ENCODE measurements at regions of chr7 and their contacts with region 1.

Region 1: DNA sequence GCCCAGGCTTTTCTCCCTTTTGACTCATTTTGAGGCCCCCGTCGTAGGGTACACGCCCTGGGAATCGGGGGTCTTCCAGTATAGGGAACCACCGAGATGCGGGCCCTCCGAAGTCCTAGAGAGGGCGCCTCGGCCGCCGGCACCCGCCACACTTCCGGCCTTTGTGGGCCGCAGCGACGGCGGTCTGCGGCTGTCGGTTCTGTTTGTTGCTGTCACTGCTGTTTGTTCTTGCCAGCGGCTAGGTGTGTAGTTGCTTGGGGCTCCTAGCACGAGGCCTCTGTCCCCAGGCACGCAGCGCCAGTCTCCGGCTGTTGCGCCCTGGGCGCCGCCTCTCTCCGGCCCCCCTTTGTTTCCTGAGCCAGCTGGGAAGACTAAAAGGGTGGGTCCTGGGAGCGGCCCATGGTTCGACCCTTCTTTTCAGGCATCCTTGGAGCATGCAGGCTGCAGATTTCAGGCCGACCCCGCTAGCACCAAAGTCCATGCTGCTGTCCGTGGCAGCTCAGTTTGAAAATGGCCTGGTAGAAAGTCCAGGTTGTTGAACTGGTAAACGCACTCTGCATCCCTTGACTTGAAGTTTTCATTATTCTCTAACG is 17.8 kb upstream of the ZKSCAN1 start:
- DNase-seq: no peak
- ATAC-seq: peak; percentile 46
- H3K4me3 ChIP-seq: peak overlapping the region; percentile 39; the same call in 1 of the 2 replicates
- H3K27ac ChIP-seq: no peak overlapping the region
- H3K4me1 ChIP-seq: peaks cover 1% of the 10 kb centered on the region; the same call in 1 of the 2 replicates
- H3K27me3 ChIP-seq: peaks cover 5% of the 10 kb centered on the region
- CTCF ChIP-seq: no peak
- POLR2A ChIP-seq: no peak
- RAD21 ChIP-seq: no peak

Region 2: DNA sequence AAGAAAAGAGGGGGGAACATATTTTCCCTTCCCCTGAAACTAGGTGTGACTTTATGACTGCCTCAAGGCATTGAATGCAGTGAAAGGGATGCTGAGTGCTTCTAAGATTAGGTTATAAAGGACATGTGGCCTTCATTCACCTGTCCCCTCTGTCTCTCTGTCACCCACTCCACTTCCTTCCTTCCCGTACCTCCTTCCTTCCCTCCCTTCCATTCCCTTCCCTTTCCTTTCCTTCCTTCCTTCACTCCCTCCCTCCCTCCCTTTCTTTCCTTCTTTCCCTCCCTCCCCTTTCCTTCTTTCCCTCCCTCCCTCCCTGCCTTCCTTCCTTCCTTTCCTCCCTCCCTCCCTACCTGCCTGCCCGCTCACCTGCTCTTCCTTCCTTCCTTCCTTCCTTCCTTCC is 13.3 kb after region 1 on chr7:
- CTCF ChIA-PET with region 1: no interaction called
- POLR2A ChIA-PET with region 1: no interaction called
- dilution Hi-C with region 1: no loop called
- in situ Hi-C with region 1: no loop called
- intact Hi-C with region 1: no loop called
- DNase-seq: no peak
- ATAC-seq: no peak
- H3K4me3 ChIP-seq: no peak overlapping the region
- H3K27ac ChIP-seq: no peak overlapping the region
- H3K4me1 ChIP-seq: no peaks in the 10 kb centered on the region
- H3K27me3 ChIP-seq: peaks cover 12% of the 10 kb centered on the region
- CTCF ChIP-seq: no peak
- POLR2A ChIP-seq: no peak
- RAD21 ChIP-seq: no peak

Region 3: DNA sequence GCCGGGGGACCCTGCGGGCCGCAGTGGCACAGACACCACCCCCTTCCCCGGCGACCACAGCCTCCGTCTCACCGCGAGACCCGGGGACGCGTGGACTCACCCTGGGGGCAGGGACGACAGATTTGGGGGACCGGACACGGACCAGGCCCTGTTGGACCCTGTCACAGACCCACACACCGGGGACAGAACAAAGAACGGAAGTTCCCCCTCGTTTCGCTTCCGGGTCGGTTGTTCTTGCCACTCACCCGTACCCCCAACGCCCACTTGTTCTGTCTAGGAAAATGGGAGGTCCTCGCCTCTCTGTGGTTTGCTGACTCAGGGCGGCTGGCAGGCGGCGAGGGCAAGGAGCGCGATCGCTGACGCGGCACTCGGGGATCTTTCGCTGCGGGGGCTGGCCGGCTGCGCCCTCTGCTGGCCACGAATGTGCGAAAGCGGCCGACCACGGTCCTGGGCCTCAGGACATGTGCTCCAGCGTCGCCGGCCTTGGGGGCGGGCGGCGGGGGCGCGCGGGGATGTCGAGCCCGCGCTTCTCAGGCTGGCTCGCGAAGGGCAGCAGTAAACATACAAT is 84.0 kb after region 1 on chr7 and contains the start of gene ZNF3:
- CTCF ChIA-PET with region 1: no interaction called
- POLR2A ChIA-PET with region 1: no interaction called
- dilution Hi-C with region 1: no loop called
- in situ Hi-C with region 1: no loop called
- intact Hi-C with region 1: loop called (anchors 1 kb)
- DNase-seq: peak; percentile 99
- ATAC-seq: peak; percentile 90
- H3K4me3 ChIP-seq: peak within 1 kb of the TSS; percentile 73
- H3K27ac ChIP-seq: peak within 1 kb of the TSS; percentile 87
- H3K4me1 ChIP-seq: peaks cover 9% of the 10 kb centered on the region
- H3K27me3 ChIP-seq: no peaks in the 10 kb centered on the region
- CTCF ChIP-seq: peak; percentile 95
- POLR2A ChIP-seq: peak; percentile 90
- RAD21 ChIP-seq: peak; percentile 73
- total RNA-seq, gene ZNF3: 30.8 and 33.1 TPM in 2 replicates

Region 4: DNA sequence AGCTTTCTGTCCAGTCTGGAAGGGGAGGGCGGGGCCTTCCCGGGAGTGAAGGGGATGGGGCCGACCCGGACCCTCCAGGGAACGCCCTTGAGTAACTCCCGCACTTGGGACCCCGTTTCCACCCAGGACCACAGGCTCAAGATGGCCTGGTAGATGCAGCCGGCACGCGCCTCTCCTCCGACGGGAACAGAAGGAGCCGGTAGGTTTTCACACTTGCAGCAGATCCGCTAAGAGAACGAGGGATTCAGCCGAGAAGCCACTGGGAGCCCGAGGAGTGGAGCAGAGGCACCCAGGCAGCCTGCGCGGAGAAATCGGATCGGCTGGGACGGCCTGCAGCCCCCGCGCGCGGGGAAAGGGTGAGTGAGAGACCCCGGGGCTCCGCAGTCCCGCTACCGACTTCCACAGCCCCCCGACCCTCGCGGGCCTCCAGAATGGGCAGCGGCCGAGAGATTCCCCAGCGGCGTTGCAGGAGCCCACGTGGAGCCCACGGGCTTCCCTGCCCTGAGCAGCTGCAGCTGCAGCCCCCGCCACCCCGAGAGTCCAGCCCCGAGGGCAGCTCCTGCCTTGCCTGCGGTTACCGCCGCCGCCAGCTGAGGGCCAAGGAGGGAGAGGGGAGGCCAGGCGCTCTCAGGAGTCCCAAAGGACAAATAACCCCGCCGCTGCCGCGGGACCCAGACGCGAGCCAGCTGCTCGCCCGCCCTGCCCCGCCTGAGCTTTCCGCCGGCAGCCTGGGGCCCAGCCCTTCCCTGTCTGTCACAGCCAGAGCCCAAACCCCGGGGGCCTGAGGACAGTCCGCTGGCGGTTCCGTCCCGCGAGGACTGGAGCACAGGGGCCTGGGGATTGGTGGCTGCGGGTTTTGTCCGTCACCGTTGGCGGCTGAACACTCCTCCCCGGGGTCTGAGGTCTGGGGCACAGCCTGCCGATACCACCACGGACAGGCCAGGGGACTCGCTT is 1302.1 kb after region 1 on chr7:
- CTCF ChIA-PET with region 1: no interaction called
- POLR2A ChIA-PET with region 1: no interaction called
- dilution Hi-C with region 1: no loop called
- in situ Hi-C with region 1: loop called (anchors 25 kb)
- intact Hi-C with region 1: no loop called
- DNase-seq: no peak
- ATAC-seq: peak; percentile 58
- H3K4me3 ChIP-seq: no peak overlapping the region
- H3K27ac ChIP-seq: no peak overlapping the region
- H3K4me1 ChIP-seq: no peaks in the 10 kb centered on the region
- H3K27me3 ChIP-seq: peaks cover 61% of the 10 kb centered on the region
- CTCF ChIP-seq: no peak
- POLR2A ChIP-seq: no peak
- RAD21 ChIP-seq: no peak

Measured in IMR-90 (cell line).